ENCODE measurements at regions of chr7 and their contacts with region 1.

Region 1: GRCh38 chr7:50092579-50093491 is at the start of gene ZPBP:
- DNase-seq: peak; percentile 76
- ATAC-seq: peak; percentile 81
- H3K4me3 Mint-ChIP-seq: peak within 1 kb of the TSS; percentile 84
- H3K27ac Mint-ChIP-seq: peak within 1 kb of the TSS; percentile 94
- H3K4me1 Mint-ChIP-seq: peaks cover 11% of the 10 kb centered on the region
- H3K27me3 Mint-ChIP-seq: no peaks in the 10 kb centered on the region
- total RNA-seq, gene ZPBP: not detected

Region 2: GRCh38 chr7:50068961-50069551 is 23.8 kb before region 1 on chr7:
- CTCF ChIA-PET with region 1: interaction called, 11 read pairs
- POLR2A ChIA-PET with region 1: no interaction called
- intact Hi-C with region 1: loop called in 1 of 2 experiments (anchors 2 kb)
- DNase-seq: peak; percentile 53
- ATAC-seq: peak; percentile 81
- H3K4me3 Mint-ChIP-seq: peak overlapping the region; percentile 72
- H3K27ac Mint-ChIP-seq: peak overlapping the region; percentile 81
- H3K4me1 Mint-ChIP-seq: peaks cover 22% of the 10 kb centered on the region
- H3K27me3 Mint-ChIP-seq: no peaks in the 10 kb centered on the region

Region 3: GRCh38 chr7:50125766-50126165 is 32.9 kb after region 1 on chr7:
- CTCF ChIA-PET with region 1: no interaction called
- POLR2A ChIA-PET with region 1: no interaction called
- intact Hi-C with region 1: no loop called
- DNase-seq: no peak
- ATAC-seq: no peak
- H3K4me3 Mint-ChIP-seq: no peak overlapping the region
- H3K27ac Mint-ChIP-seq: no peak overlapping the region
- H3K4me1 Mint-ChIP-seq: no peaks in the 10 kb centered on the region
- H3K27me3 Mint-ChIP-seq: no peaks in the 10 kb centered on the region

Region 4: DNA sequence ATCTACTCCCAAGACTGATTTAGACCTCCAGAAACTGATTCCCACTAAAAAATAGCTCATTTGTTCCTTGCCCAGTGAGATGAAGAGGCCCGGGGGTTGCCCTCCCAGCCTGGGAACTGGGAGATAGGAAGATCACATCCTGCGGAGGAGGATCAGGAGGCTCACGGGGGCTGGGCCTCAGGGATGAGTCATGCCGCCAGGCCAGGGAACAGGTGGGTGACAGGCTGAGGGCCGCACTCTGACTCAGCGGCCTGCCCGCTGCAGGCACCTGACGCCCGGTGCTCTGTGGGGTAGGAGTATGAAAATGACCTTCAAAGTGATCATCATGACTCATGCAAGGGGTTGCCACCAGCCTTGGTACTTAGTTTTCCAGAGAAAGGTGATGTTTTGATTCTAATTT is 104.7 kb after region 1 on chr7:
- CTCF ChIA-PET with region 1: no interaction called
- POLR2A ChIA-PET with region 1: no interaction called
- intact Hi-C with region 1: no loop called
- DNase-seq: peak; percentile 91
- ATAC-seq: peak; percentile 96
- H3K4me3 Mint-ChIP-seq: peak overlapping the region; percentile 9
- H3K27ac Mint-ChIP-seq: peak overlapping the region; percentile 76
- H3K4me1 Mint-ChIP-seq: peaks cover 43% of the 10 kb centered on the region
- H3K27me3 Mint-ChIP-seq: no peaks in the 10 kb centered on the region

Region 5: DNA sequence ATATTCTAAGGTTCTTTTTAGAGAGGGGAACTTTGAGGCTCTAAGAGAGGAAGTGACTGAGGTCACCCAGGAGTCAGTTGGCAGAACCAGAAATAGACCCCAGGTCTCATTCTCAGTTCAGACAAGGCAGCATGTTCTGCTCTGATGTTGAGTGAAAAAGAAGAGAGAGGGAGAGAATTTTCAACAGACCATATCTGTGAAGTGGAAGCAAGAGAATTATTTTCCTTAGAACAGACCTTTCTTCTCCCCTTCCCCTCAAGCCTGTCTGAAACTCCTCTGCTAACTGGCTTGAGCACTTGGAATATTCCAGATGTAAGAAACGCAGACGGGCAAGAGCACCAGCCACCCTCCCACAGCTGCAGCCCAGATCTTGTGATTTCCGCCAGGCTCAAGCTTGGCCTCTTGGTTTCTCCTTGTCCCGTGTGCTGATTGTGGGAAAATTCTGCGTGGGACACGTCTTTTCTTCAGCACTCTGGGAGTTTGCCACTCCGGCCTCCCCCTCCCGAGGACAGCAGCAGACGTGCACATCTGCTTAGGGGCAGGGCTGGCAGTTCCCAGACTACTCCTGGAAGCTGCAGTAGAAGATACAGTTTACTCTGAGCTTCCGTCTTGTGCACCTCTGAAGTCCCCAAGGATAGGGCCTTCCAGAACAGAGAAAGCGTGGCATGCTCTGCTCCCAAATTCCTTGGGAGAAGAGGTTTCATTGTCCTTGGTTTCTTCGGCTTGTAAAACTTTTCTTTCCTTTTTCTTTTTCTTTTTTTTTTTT is 189.0 kb after region 1 on chr7:
- CTCF ChIA-PET with region 1: no interaction called
- POLR2A ChIA-PET with region 1: no interaction called
- intact Hi-C with region 1: no loop called
- DNase-seq: no peak
- ATAC-seq: peak; percentile 64
- H3K4me3 Mint-ChIP-seq: peak overlapping the region; percentile 55
- H3K27ac Mint-ChIP-seq: peak overlapping the region; percentile 85
- H3K4me1 Mint-ChIP-seq: peaks cover 64% of the 10 kb centered on the region
- H3K27me3 Mint-ChIP-seq: no peaks in the 10 kb centered on the region

Region 6: GRCh38 chr7:50317221-50317678 is 224.4 kb after region 1 on chr7:
- CTCF ChIA-PET with region 1: interaction called, 3 read pairs
- POLR2A ChIA-PET with region 1: no interaction called
- intact Hi-C with region 1: loop called (anchors 5 kb)
- DNase-seq: peak; percentile 73
- ATAC-seq: peak; percentile 82
- H3K4me3 Mint-ChIP-seq: peak overlapping the region; percentile 95
- H3K27ac Mint-ChIP-seq: peak overlapping the region; percentile 100
- H3K4me1 Mint-ChIP-seq: peaks cover 93% of the 10 kb centered on the region
- H3K27me3 Mint-ChIP-seq: no peaks in the 10 kb centered on the region

Region 7: DNA sequence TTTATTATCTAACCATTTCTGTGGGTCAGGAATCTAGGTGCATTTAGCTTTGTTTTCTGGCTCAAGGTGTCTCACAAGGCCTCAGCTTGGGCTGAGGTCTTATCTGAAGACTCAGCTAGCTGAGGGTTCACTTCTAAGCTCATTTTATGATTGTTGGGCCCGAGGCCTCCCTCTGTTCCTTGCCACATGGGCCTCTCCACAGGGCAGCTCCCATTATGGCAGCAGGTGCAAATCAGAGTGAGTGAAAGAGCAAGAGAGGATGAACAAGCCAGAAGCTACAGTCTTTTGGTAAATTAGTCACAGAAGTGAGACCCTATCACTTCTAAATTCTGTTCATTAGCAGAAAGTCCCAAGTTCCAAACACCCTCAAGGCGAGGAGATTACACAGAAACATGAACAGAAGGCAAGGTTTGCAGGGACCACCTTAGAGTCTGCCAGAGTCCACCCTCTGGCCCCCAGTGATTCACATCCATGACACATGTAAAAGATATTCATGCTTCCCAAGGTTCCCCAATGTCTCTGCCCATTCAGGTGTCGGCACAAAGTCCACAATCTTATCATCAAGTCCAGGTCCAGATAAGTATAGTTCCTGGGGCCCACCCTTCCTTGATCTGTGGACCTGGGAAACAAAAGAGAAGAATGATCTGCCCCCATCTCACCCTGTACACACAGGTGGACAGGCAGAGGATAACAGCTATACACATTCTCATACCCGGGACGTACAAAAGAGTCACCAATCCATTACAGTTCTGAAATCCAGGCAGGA is 333.6 kb after region 1 on chr7:
- CTCF ChIA-PET with region 1: interaction called, 12 read pairs
- POLR2A ChIA-PET with region 1: no interaction called
- intact Hi-C with region 1: no loop called
- DNase-seq: no peak
- ATAC-seq: no peak
- H3K4me3 Mint-ChIP-seq: no peak overlapping the region
- H3K27ac Mint-ChIP-seq: no peak overlapping the region
- H3K4me1 Mint-ChIP-seq: no peaks in the 10 kb centered on the region
- H3K27me3 Mint-ChIP-seq: no peaks in the 10 kb centered on the region

Region 8: DNA sequence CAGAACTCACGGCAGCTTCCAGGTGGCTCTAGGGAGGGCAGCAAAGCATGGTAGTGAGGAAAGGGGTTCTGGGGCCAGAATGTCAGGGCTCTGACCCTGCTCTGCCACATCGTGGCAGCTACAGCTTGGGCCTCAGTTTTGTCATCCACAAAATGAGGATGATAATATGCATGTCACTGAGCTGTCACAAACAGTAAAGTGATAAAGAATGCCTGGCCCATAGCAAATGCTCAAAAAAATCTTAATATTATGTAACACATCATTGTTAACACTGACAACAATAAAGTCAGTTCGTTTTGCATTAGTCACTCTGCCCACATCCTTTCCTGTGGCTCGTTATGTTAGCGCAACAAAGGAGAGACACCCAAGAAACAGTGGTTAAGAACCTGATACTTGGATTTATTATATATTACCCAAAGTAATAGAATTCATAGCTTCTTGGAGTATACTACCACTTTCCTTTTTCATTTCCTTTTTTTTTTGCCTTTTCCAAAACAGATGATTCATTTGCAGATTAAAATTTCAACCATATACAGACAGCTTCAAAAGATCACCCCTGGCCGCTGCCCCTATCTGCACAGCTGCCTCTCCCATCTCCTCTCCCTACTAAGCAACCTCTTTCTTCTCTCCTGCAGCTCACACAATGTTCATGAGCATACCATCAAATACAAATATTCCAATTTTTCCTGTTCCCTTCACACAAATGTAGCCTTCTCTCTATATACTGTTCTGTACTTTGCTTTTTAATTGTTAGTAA is 517.9 kb after region 1 on chr7:
- CTCF ChIA-PET with region 1: interaction called, 3 read pairs
- POLR2A ChIA-PET with region 1: no interaction called
- intact Hi-C with region 1: loop called in 1 of 2 experiments (anchors 5 kb)
- DNase-seq: peak; percentile 69
- ATAC-seq: peak; percentile 80
- H3K4me3 Mint-ChIP-seq: no peak overlapping the region
- H3K27ac Mint-ChIP-seq: no peak overlapping the region
- H3K4me1 Mint-ChIP-seq: peaks cover 29% of the 10 kb centered on the region
- H3K27me3 Mint-ChIP-seq: peaks cover 3% of the 10 kb centered on the region

Region 9: DNA sequence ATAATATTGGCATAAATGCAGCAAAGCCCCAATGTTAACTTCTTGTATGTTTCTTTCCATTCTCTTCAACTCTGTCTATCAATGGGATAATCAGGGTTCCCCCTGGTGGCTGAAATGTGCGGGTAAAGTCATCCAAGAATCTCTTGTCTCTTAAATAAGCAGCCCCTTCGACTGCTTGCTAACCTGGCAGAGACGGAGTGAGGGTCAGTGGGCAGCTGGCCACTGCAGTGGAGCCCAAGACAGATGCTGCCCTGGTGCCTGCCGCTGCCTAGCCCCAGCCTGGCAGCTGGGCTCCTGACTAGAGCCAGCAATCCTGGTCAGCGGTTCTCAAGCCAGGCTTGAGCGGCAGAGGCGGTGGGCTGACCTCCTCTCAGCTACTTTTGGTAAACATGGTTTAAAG is 974.9 kb after region 1 on chr7:
- CTCF ChIA-PET with region 1: interaction called, 3 read pairs
- POLR2A ChIA-PET with region 1: no interaction called
- intact Hi-C with region 1: loop called (anchors 1 kb)
- DNase-seq: peak; percentile 72
- ATAC-seq: no peak
- H3K4me3 Mint-ChIP-seq: no peak overlapping the region
- H3K27ac Mint-ChIP-seq: no peak overlapping the region
- H3K4me1 Mint-ChIP-seq: no peaks in the 10 kb centered on the region
- H3K27me3 Mint-ChIP-seq: no peaks in the 10 kb centered on the region

Region 10: GRCh38 chr7:51366930-51367613 is 1274.2 kb after region 1 on chr7:
- CTCF ChIA-PET with region 1: no interaction called
- POLR2A ChIA-PET with region 1: no interaction called
- intact Hi-C with region 1: loop called in 1 of 2 experiments (anchors 10 kb)
- DNase-seq: peak; percentile 14
- ATAC-seq: peak; percentile 69
- H3K4me3 Mint-ChIP-seq: no peak overlapping the region
- H3K27ac Mint-ChIP-seq: no peak overlapping the region
- H3K4me1 Mint-ChIP-seq: no peaks in the 10 kb centered on the region
- H3K27me3 Mint-ChIP-seq: peaks cover 2% of the 10 kb centered on the region

Measured in activated CD4-positive, alpha-beta T cell treated with anti-CD3 and anti-CD28 coated beads for 36 hours (primary cell).